B cell (primary cell): ENCODE measurements at regions of chr1 and their contacts with region 1.

Region 1: GRCh38 chr1:95072532-95073419 is at the start of gene ALG14:
- DNase-seq: peak; percentile 98
- ATAC-seq: peak; percentile 95
- H3K4me3 ChIP-seq: peak within 1 kb of the TSS; percentile 78 to 92 (median 86)
- H3K4me3 Mint-ChIP-seq: peak within 1 kb of the TSS; percentile 98
- H3K27ac ChIP-seq: peak within 1 kb of the TSS; percentile 66 to 70
- H3K27ac Mint-ChIP-seq: peak within 1 kb of the TSS; percentile 99
- H3K4me1 ChIP-seq: peaks cover 11 to 14% of the 10 kb centered on the region in 2 donors
- H3K4me1 Mint-ChIP-seq: peaks cover 20% of the 10 kb centered on the region
- H3K27me3 ChIP-seq: peaks cover 0 to 2% (median 0%) of the 10 kb centered on the region in 4 experiments
- H3K27me3 Mint-ChIP-seq: no peaks in the 10 kb centered on the region
- CTCF ChIP-seq: no peak
- total RNA-seq, gene ALG14: 2.6 and 3.3 TPM in 2 replicates

Region 2: DNA sequence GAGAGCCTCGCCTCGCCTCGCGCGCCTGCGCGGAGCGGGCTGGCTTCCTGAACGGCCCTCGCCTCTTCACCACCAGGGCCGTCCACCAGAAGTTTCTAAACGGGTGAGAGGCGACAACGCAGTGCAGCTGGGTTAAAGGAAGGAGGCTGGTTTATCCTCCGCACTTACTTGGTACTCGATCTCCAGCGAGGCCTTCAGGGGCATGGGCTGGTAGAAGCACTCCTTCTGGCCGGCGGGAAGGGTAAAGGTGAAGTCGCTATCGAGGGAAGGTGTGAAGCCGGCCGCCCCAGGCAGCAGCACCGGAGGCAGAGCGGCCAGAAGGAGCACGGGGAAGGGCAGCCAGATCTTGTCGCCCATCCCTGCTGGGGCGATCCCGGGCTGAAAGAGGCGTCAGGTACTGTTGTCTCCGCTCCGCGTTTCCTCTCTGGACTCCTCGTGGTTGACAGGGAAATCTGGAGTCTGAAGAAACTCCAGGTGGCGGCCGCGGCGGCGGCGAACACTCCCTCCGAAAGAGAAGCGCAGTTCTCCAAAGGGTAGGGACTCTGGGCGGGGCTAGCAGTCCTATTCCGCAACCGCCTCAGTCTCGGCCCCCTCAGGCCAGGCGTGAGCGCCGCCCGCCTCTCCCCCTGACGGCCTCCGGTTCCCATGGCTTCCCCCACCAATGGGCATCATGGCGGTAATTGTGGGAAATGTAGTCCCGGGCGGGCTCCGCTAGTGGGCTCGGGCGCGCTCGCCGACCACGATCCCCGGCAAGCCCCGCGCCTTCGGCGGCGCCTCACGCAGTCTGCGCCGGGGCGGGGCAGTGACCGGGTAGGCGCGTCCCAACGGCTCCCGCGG is 1892.7 kb before region 1 on chr1 and contains the start of gene TMED5:
- CTCF ChIA-PET with region 1: no interaction called
- POLR2A ChIA-PET with region 1: no interaction called
- intact Hi-C with region 1: loop called (anchors 5 kb)
- DNase-seq: peak; percentile 97
- ATAC-seq: peak; percentile 85
- H3K4me3 ChIP-seq: peak within 1 kb of the TSS; percentile 81 to 98 (median 97)
- H3K4me3 Mint-ChIP-seq: peak within 1 kb of the TSS; percentile 90
- H3K27ac ChIP-seq: peak within 1 kb of the TSS; percentile 95 to 96
- H3K27ac Mint-ChIP-seq: peak within 1 kb of the TSS; percentile 93
- H3K4me1 ChIP-seq: peaks cover 27 to 35% of the 10 kb centered on the region in 2 donors
- H3K4me1 Mint-ChIP-seq: peaks cover 34% of the 10 kb centered on the region
- H3K27me3 ChIP-seq: no peaks in the 10 kb centered on the region
- H3K27me3 Mint-ChIP-seq: no peaks in the 10 kb centered on the region
- CTCF ChIP-seq: peak; percentile 24
- total RNA-seq, gene TMED5: 46.1 and 50.7 TPM in 2 replicates

Region 3: DNA sequence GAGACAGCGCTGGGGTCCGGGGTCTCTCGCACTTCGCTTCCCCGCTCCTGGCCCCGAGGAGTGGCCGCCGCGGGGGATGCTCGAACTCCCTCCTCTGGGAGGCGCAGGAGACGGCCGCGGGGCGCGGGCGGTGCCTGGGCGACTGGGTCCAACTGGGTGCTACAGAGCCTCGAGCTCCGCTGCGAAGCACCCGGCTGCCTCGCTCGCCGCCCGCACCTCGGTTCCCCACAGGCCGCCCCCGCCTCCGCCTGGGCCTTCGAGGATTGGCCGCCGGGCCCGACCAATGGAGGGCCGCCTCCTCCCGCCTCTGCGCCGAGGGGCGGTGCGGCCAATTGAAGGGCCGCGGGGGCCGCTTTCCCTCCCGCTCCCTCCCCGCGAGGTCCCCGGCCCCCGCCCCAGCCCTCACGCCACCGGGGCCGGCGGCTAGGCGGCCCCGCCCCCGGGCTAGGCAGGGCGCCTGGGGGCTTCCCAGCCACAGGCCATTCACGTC is 145.8 kb before region 1 on chr1 and contains the start of gene CNN3:
- CTCF ChIA-PET with region 1: no interaction called
- POLR2A ChIA-PET with region 1: no interaction called
- intact Hi-C with region 1: loop called (anchors 1 kb)
- DNase-seq: peak; percentile 86
- ATAC-seq: peak; percentile 85
- H3K4me3 ChIP-seq: peak within 1 kb of the TSS; percentile 56 to 67 (median 61)
- H3K4me3 Mint-ChIP-seq: peak within 1 kb of the TSS; percentile 95
- H3K27ac ChIP-seq: peak within 1 kb of the TSS in 1 of 2 donors; percentile 82
- H3K27ac Mint-ChIP-seq: peak within 1 kb of the TSS; percentile 80
- H3K4me1 ChIP-seq: peaks cover 24 to 28% of the 10 kb centered on the region in 2 donors
- H3K4me1 Mint-ChIP-seq: peaks cover 26% of the 10 kb centered on the region
- H3K27me3 ChIP-seq: peaks cover 0 to 30% (median 9%) of the 10 kb centered on the region in 4 experiments
- H3K27me3 Mint-ChIP-seq: peaks cover 27% of the 10 kb centered on the region
- CTCF ChIP-seq: no peak
- total RNA-seq, gene CNN3: 17.2 and 21.1 TPM in 2 replicates

Region 4: DNA sequence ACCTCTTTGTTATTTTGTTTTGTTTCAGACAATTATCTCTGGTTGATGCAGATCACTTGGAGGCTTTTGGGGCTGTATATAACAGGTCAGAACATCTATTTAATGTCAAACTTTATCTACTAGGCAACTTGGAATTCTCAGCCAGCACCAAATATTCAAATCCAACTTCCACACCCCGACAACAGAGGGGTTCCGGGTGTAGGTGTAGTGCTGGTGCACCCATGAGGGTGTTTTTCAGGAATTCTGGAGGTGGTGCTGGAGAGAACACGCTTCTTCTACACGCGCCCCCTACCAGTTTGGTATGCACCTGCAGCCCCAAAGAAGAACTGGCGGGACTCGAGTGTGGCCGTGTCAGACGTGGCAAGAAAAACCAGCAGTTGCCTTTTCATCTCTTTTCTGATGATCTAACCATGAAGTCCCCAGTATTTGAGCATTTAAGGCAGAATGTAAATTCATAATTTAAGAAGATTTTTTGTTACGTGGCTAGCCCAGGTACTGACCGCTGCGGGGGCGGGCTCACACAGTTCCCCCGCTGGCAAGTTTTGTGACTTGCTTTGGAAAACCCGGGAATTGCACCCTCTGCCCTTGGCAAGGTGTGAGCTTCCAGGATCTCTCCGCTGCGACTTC is 43.9 kb after region 1 on chr1:
- CTCF ChIA-PET with region 1: interaction called, 4 read pairs
- POLR2A ChIA-PET with region 1: no interaction called
- intact Hi-C with region 1: loop called (anchors 2 kb)
- DNase-seq: peak; percentile 74
- ATAC-seq: peak; percentile 83
- H3K4me3 ChIP-seq: peak overlapping the region; percentile 19 to 88 (median 74)
- H3K4me3 Mint-ChIP-seq: peak overlapping the region; percentile 97
- H3K27ac ChIP-seq: peak overlapping the region in 1 of 2 donors; percentile 35
- H3K27ac Mint-ChIP-seq: peak overlapping the region; percentile 90
- H3K4me1 ChIP-seq: peaks cover 5 to 10% of the 10 kb centered on the region in 2 donors
- H3K4me1 Mint-ChIP-seq: peaks cover 11% of the 10 kb centered on the region
- H3K27me3 ChIP-seq: peaks cover 0 to 29% (median 17%) of the 10 kb centered on the region in 4 experiments
- H3K27me3 Mint-ChIP-seq: peaks cover 49% of the 10 kb centered on the region
- CTCF ChIP-seq: peak; percentile 74

Region 5: GRCh38 chr1:95323123-95323522 is 250.3 kb after region 1 on chr1:
- CTCF ChIA-PET with region 1: no interaction called
- POLR2A ChIA-PET with region 1: no interaction called
- intact Hi-C with region 1: no loop called
- DNase-seq: no peak
- ATAC-seq: no peak
- H3K4me3 ChIP-seq: no peak overlapping the region
- H3K4me3 Mint-ChIP-seq: no peak overlapping the region
- H3K27ac ChIP-seq: no peak overlapping the region
- H3K27ac Mint-ChIP-seq: no peak overlapping the region
- H3K4me1 ChIP-seq: no peaks in the 10 kb centered on the region
- H3K4me1 Mint-ChIP-seq: no peaks in the 10 kb centered on the region
- H3K27me3 ChIP-seq: peaks cover 0 to 3% (median 0%) of the 10 kb centered on the region in 4 experiments
- H3K27me3 Mint-ChIP-seq: peaks cover 7% of the 10 kb centered on the region
- CTCF ChIP-seq: no peak

Region 6: DNA sequence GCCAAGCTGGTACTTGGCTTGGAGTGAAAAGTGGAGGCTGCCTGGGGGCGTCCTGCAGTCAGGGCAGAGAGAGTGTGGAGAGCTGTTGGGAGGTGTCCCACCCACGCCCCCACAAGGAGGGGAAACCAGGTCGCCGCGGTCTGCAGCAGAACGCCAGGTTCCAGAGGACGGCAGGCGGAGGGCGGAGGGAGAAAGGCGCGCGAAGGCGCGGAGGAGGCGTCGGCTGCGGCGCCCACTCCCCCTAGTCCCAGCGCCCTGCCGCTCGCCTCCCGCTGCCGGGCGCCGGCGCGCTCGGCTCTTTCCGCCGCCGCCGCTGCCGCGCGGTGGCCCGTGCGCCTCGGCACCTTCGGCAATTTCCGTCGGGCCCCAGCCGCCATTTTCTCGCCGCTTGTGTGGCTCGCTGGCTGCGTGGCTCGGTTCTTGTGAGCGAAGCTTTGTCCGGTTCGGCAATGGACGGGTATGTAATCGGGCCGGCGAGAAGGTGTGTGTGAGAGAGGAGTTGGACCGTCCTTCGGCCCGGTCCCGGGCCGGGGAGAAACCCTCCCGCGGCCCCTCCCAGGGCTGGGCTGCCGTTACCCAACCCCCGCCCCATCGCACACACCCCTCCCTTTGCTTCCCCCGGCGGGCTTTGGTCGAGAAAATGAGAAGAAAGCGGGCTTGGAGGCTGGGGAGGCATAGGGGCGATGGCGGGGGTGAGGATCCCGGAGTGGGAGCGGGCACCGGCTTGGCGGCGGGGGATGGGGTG is 1648.8 kb after region 1 on chr1 and contains the start of gene PTBP2:
- CTCF ChIA-PET with region 1: no interaction called
- POLR2A ChIA-PET with region 1: no interaction called
- intact Hi-C with region 1: loop called (anchors 5 kb)
- DNase-seq: peak; percentile 91
- ATAC-seq: peak; percentile 88
- H3K4me3 ChIP-seq: peak within 1 kb of the TSS; percentile 85 to 96 (median 89)
- H3K4me3 Mint-ChIP-seq: peak within 1 kb of the TSS; percentile 97
- H3K27ac ChIP-seq: peak within 1 kb of the TSS; percentile 93 to 94
- H3K27ac Mint-ChIP-seq: peak within 1 kb of the TSS; percentile 99
- H3K4me1 ChIP-seq: peaks cover 13 to 18% of the 10 kb centered on the region in 2 donors
- H3K4me1 Mint-ChIP-seq: peaks cover 28% of the 10 kb centered on the region
- H3K27me3 ChIP-seq: no peaks in the 10 kb centered on the region
- H3K27me3 Mint-ChIP-seq: no peaks in the 10 kb centered on the region
- CTCF ChIP-seq: no peak
- total RNA-seq, gene PTBP2: 30.5 and 33.6 TPM in 2 replicates